AG04450 (cell line): ENCODE measurements at regions of chr5 and their contacts with region 1.

Region 1: DNA sequence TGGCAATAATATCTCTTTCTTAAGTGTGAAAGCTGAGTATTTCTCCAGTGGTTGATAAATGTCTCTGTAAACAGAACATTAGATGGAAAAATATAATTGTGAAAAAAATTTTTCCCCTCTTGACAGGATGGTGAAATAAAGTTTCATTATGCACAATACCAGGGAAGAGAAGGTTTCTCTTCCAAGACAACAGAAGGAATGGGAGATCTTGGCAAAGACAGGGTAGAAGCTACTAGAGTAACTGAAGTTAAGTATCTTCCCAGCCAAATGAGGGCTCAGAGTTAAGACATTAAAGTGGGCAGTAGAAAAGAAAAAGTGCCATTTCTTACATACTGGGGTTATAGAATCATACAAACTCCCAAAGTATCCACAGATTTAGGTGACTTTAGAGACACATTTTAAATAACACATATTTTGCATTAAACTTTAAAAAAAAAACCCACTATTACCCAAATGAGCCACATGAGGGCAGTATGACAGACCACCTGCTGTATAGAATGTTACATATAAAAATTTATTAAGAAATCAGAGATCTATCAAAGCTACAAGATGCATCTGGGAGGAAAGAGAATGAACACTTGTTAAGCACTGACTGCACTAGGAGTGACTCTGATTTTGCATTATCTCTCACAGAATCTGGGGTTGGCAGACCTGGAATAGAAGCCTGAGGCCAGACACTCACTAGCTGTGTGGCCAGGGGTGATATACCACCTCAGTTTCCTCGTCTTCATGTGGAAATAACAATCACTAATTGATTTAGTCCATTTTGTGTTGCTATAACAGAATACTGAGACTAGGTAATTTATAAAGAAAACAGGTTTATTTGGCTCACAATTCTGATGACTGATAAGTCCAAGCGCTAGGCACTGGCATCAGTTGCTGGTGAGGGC is 98.5 kb downstream of the ARSB start:
- DNase-seq: no peak
- H3K4me3 ChIP-seq: no peak overlapping the region
- H3K27ac ChIP-seq: no peak overlapping the region
- H3K27me3 ChIP-seq: no peaks in the 10 kb centered on the region
- CTCF ChIP-seq: peak; percentile 64

Region 2: DNA sequence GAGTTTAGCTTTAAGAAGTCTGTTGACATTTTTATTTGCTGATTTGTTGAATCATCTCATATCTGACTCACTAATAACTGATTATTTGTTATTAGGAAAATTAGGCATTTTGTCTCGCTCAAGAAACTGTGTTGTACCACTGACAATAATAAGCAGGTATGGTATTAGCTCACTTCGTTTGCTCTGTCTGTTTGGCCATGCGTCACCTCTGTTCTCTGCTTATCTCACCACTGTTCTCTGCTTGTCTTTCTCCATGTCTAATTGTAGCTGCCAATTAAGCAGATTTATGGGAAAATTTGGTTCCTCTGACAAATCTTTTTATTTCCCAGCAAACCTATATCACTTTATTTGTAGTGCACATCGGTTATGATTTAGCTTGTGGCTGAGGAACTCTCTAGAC is 1533.3 kb before region 1 on chr5:
- CTCF ChIA-PET with region 1: no interaction called
- POLR2A ChIA-PET with region 1: no interaction called
- DNase-seq: no peak
- H3K4me3 ChIP-seq: no peak overlapping the region
- H3K27ac ChIP-seq: no peak overlapping the region
- H3K27me3 ChIP-seq: peaks cover 14% of the 10 kb centered on the region
- CTCF ChIP-seq: no peak

Region 3: DNA sequence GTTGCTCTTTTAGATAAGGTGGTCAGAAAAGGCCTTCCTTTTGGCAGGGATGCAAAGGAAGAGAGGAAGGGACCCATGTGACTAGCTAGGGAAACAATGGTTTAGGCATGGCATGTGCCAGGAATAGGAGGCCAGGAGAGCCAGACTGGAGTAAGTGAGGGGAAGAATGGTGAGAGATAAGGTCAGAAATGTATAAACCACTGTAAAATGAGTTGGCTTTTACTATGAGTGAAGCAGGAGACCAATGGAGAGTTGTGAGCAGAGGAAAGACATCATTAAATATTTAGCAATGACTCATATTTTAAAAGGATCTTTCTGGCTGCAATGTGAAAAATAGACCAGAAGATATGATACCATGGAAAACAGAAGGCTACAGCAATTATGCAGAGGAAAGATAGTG is 642.9 kb before region 1 on chr5:
- CTCF ChIA-PET with region 1: no interaction called
- POLR2A ChIA-PET with region 1: interaction called, 11 read pairs
- DNase-seq: peak; percentile 33
- H3K4me3 ChIP-seq: no peak overlapping the region
- H3K27ac ChIP-seq: peak overlapping the region; percentile 66
- H3K27me3 ChIP-seq: no peaks in the 10 kb centered on the region
- CTCF ChIP-seq: no peak

Region 4: GRCh38 chr5:78899922-78900362 is 13.4 kb after region 1 on chr5:
- CTCF ChIA-PET with region 1: interaction called, 14 read pairs
- POLR2A ChIA-PET with region 1: no interaction called
- DNase-seq: no peak
- H3K4me3 ChIP-seq: no peak overlapping the region
- H3K27ac ChIP-seq: no peak overlapping the region
- H3K27me3 ChIP-seq: no peaks in the 10 kb centered on the region
- CTCF ChIP-seq: peak; percentile 77